AG04450 (cell line): ENCODE measurements at regions of chr15 and their contacts with region 1.

Region 1: GRCh38 chr15:91852741-91853510 is 582 bp upstream of the SLCO3A1 start:
- DNase-seq: no peak
- H3K4me3 ChIP-seq: peak overlapping the region; percentile 72
- H3K27ac ChIP-seq: peak overlapping the region; percentile 72
- H3K27me3 ChIP-seq: no peaks in the 10 kb centered on the region
- CTCF ChIP-seq: peak; percentile 70

Region 2: GRCh38 chr15:91302588-91303439 is 550.1 kb before region 1 on chr15:
- CTCF ChIA-PET with region 1: interaction called, 29 read pairs
- POLR2A ChIA-PET with region 1: no interaction called
- DNase-seq: peak; percentile 30
- H3K4me3 ChIP-seq: no peak overlapping the region
- H3K27ac ChIP-seq: no peak overlapping the region
- H3K27me3 ChIP-seq: peaks cover 5% of the 10 kb centered on the region
- CTCF ChIP-seq: peak; percentile 81

Region 3: GRCh38 chr15:91699741-91700140 is 153.2 kb before region 1 on chr15:
- CTCF ChIA-PET with region 1: no interaction called
- POLR2A ChIA-PET with region 1: no interaction called
- DNase-seq: no peak
- H3K4me3 ChIP-seq: no peak overlapping the region
- H3K27ac ChIP-seq: no peak overlapping the region
- H3K27me3 ChIP-seq: no peaks in the 10 kb centered on the region
- CTCF ChIP-seq: no peak

Region 4: DNA sequence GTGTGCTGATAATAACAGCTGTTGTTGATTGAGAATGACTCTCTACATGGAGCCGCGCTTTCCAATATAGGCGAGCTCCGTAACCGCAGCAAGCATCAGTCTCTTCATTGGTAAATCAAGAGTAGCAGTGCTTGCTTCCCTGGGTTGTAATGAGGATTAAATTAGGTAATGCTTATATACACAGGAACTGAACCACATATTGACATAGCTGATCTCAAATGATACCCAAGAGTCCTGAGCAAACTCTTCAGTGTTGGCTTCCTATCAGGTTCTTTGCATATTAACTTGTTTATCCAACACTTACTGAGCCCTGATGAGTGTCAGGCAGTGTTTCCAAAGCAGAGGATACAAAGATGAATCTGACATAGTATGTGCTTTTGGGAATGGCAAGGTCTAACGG is 45.8 kb before region 1 on chr15:
- CTCF ChIA-PET with region 1: no interaction called
- POLR2A ChIA-PET with region 1: no interaction called
- DNase-seq: no peak
- H3K4me3 ChIP-seq: no peak overlapping the region
- H3K27ac ChIP-seq: no peak overlapping the region
- H3K27me3 ChIP-seq: no peaks in the 10 kb centered on the region
- CTCF ChIP-seq: no peak

Region 5: GRCh38 chr15:91867581-91868026 is 14.7 kb after region 1 on chr15:
- CTCF ChIA-PET with region 1: interaction called, 36 read pairs
- POLR2A ChIA-PET with region 1: interaction called, 3 read pairs
- DNase-seq: peak; percentile 57
- H3K4me3 ChIP-seq: no peak overlapping the region
- H3K27ac ChIP-seq: peak overlapping the region; percentile 92
- H3K27me3 ChIP-seq: no peaks in the 10 kb centered on the region
- CTCF ChIP-seq: no peak

Region 6: DNA sequence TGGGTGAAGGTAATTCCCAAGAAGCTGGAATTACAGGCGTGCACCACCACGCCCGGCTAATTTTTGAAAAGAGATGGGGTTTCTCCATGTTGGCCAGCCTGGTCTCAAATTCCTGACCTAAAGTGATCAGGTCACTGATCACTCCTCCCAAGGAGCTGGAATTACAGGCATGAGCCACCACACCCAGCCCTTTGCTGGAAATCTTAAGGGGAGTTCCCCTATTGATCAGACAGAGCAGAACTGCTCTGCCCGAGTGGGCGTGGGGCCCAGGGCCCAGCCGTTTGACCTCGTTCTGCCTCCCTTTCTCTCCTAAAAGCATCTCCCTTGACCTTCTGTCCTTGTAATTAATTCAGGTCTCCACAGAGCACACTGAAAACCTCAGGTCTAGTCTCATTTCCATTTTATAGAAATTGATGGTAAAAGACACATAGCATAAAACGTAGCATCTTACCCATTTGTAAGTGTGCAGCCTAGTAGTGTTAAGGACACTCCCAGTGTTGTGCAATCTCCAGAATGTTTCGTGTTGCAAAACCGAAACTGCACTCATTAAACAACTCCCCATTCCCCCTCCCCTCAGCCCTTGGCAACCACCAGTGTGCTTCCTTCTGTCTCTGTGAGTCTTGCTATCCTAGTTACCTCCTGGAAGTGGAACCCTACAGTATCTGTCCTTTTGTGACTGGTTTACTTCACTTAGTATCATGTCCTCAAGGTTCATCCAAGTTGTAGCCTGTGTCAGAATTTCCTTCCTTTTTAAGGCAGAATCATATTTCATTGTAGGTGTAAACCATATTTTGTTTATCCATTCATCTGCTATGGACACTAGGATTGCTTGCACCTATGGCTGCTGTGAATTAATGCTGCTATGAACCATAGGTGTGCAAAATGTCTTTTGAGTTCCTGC is 90.0 kb after region 1 on chr15:
- CTCF ChIA-PET with region 1: interaction called, 27 read pairs
- POLR2A ChIA-PET with region 1: interaction called, 4 read pairs
- DNase-seq: peak; percentile 72
- H3K4me3 ChIP-seq: no peak overlapping the region
- H3K27ac ChIP-seq: no peak overlapping the region
- H3K27me3 ChIP-seq: no peaks in the 10 kb centered on the region
- CTCF ChIP-seq: no peak

Region 7: GRCh38 chr15:91981821-91982801 is 129.2 kb after region 1 on chr15:
- CTCF ChIA-PET with region 1: interaction called, 27 read pairs
- POLR2A ChIA-PET with region 1: no interaction called
- DNase-seq: no peak
- H3K4me3 ChIP-seq: no peak overlapping the region
- H3K27ac ChIP-seq: no peak overlapping the region
- H3K27me3 ChIP-seq: no peaks in the 10 kb centered on the region
- CTCF ChIP-seq: peak; percentile 42

Region 8: DNA sequence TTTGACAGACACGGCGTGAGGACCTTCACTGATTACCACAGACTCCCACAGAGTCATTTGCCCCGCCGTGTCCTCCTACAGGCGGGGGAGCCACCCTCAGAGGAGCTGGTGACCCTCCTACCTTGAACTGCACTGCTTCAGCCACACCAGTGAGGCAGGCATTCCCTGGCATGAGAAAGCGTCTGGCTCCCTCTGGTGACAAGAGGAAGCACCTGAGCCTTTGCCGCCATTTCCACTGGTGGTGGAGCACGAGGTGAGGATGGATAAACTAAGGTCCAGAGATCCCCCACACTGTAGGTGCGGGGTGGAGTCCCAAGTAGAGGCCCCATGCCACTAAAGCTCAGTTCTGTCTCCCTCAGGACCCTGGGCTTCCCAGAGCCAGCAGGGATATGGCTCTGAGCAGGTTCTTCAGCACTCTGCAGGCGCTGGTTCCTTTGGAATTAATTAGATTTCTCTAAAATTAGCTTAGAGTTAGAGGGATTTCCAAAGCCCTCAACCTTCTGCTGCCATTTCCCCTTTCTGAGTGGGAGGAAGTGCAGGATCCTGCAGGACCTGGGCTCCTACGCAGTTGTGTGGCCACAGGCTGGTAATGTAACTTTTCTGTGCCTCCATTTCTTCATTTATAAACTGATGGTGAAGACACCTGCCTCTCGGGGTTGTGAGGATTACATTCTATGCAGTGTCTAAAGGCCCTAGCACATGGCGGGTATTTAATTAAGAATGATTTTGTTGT is 224.6 kb after region 1 on chr15:
- CTCF ChIA-PET with region 1: interaction called, 110 read pairs
- POLR2A ChIA-PET with region 1: no interaction called
- DNase-seq: no peak
- H3K4me3 ChIP-seq: no peak overlapping the region
- H3K27ac ChIP-seq: no peak overlapping the region
- H3K27me3 ChIP-seq: no peaks in the 10 kb centered on the region
- CTCF ChIP-seq: peak; percentile 77